ENCODE measurements at regions of chr4 and their contacts with region 1.

Region 1: DNA sequence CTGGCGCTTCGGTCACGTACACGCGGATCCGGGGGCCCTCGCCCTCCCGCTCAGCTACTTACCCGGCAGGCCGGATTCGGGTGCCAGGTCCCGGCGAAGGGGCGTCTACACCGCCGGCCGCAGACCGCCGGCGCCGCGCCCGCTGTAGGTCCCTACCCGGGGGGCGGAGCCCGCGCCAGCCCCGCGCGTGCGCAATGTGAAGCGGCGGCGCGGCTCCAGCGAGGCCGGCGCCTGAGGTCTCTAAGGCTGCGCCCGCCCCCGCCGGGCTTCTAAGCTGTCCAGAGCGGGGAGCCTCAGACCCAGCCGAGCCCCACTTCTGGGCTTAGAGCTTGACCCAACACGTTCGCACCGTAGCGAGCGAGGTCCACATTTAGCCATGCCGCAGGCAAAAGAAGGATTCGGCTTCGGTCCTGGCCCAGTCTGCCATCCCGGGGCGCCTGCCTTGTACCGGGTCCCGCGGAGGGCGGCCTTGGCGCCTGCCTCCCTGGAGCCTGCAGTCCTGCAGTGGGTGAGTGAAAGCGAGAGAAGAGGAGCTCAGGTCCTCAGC is at the start of gene ZNF518B:
- DNase-seq: peak; percentile 67 to 94 (median 77)
- ATAC-seq: peak; percentile 90
- H3K4me3 ChIP-seq: peak within 1 kb of the TSS; percentile 47 to 56
- H3K27ac ChIP-seq: peak within 1 kb of the TSS; percentile 26 to 57
- H3K4me1 ChIP-seq: peaks cover 3 to 24% of the 10 kb centered on the region in 2 donors
- H3K27me3 ChIP-seq: peaks cover 10 to 50% of the 10 kb centered on the region in 2 donors
- CTCF ChIP-seq: no peak
- polyA plus RNA-seq, gene ZNF518B: 23.7 to 28.2 (median 26.6) TPM

Region 2: DNA sequence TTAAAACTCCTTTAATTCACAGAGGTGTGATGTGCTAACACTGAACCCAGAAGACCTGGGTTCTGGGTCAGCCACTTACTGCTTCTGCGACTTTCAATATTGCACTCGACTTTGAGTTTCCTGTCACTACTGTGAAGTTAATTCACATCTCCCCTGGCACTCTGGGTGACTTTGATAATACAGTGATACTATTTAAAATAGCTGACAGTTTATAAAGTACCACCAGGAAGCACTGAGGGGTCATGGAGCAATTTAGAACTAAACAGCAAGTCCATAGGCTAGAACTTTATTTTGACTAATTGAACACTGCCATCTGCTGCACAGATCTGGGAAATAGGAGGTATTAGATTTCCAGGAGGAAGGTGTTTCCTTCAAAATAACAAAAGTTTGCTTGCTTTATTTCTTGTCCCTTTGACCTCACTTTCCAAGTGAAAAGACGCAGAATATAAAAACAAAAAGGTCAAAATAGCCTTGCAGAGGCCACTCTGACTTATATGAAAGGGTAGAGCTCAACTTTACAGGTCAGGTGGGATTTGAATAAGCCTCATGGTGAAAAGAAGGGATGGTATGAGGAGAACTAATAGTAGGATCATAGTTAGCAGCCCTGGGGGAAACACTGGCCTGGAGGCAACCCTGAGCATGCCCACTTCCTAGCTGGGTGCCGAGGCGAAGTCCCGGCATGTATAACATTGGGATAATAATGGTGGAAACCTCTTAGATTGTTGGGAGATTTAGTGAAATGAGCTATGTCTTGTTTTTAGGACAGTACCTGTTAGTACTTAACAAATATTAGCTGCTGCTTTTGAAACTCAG is 53.5 kb before region 1 on chr4:
- intact Hi-C with region 1: no loop called
- DNase-seq: peak in 2 of 4 donors; percentile 12 to 45
- ATAC-seq: peak; percentile 74
- H3K4me3 ChIP-seq: no peak overlapping the region
- H3K27ac ChIP-seq: no peak overlapping the region
- H3K4me1 ChIP-seq: no peaks in the 10 kb centered on the region
- H3K27me3 ChIP-seq: no peaks in the 10 kb centered on the region
- CTCF ChIP-seq: peak; percentile 33

Region 3: GRCh38 chr4:10530137-10530786 is 72.9 kb after region 1 on chr4:
- intact Hi-C with region 1: loop called in 1 of 2 experiments (anchors 10 kb)
- DNase-seq: no peak
- ATAC-seq: no peak
- H3K4me3 ChIP-seq: no peak overlapping the region
- H3K27ac ChIP-seq: no peak overlapping the region
- H3K4me1 ChIP-seq: no peaks in the 10 kb centered on the region
- H3K27me3 ChIP-seq: no peaks in the 10 kb centered on the region
- CTCF ChIP-seq: no peak

Measured in left lung (tissue), 14 donors.